Left cardiac atrium (tissue), 4 donors: ENCODE measurements at regions of chr4 and their contacts with region 1.

Region 1: GRCh38 chr4:155353923-155354540 is 22.7 kb downstream of the MAP9 start:
- DNase-seq: peak; percentile 73
- ATAC-seq: peak; percentile 81 to 91

Region 2: GRCh38 chr4:154807042-154807630 is 546.9 kb before region 1 on chr4:
- intact Hi-C with region 1: loop called in 1 of 2 experiments (anchors 5 kb)
- DNase-seq: no peak
- ATAC-seq: no peak

Region 3: DNA sequence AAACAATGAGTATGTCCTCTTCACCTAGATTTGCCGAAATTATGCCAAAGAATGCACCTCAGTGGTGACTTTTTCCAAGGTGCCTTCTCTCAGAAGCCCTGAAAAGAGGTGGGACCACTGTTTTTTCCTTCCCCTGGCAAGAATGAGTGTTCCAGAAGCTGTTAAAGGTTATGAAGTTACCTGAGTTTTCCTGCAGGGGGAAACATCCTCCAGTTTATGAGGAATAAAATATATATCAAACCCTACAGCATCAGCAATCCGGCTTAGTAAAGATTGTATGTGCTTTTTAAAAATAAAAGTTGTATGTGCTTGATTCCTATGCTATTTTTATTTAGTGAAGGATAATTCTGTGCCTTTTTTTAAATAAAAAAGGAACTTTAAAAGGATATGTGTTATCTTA is 499.7 kb before region 1 on chr4:
- intact Hi-C with region 1: loop called in 1 of 2 experiments (anchors 5 kb)
- DNase-seq: no peak
- ATAC-seq: no peak